ENCODE measurements at regions of chr3 and their contacts with region 1.

Region 1: DNA sequence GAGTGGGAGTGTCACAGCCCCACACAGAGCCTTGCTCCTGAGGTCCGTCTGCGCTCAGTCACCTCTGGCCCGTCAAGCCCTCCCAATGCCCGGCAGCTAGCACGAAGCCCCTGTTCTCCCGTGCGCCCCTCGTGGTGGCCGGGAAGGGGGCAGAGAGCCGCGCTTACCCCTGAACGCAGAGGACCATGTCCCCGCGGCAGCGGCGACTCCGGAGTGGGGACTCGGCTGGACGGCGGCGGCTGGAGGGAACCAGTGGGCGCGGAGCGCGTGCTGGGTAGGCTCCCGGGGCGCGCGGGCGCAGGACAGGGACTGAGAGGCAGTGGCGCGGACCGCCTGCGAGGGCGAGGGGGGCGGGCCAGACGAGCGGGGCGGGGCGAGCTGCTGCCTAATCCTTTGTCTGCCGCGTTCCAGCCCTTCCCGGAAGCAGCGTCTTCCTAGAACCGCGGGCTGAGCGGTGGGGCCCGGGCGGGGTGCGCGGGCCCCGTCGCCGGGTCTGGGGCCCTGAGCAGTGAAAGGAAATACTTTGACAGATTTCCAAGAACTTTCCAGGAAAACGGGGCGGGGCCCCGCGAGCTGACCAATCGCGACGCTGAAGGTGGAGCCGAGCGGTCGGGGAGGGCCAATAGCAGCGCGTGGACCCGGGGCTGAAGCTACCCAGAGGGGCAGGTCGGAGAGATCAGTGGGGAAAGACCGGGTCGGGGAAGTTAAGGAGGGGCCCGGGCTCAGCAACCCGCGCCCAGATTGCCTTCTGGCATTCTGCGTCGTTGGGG is at the start of gene CISH:
- DNase-seq: peak; percentile 93
- H3K4me3 Mint-ChIP-seq: peak within 1 kb of the TSS; percentile 93
- H3K27ac Mint-ChIP-seq: peak within 1 kb of the TSS; percentile 42
- H3K4me1 Mint-ChIP-seq: peaks cover 40% of the 10 kb centered on the region
- H3K27me3 Mint-ChIP-seq: no peaks in the 10 kb centered on the region
- CTCF ChIP-seq: peak; percentile 37
- total RNA-seq, gene CISH: 0.26 and 0.59 TPM in 2 replicates

Region 2: DNA sequence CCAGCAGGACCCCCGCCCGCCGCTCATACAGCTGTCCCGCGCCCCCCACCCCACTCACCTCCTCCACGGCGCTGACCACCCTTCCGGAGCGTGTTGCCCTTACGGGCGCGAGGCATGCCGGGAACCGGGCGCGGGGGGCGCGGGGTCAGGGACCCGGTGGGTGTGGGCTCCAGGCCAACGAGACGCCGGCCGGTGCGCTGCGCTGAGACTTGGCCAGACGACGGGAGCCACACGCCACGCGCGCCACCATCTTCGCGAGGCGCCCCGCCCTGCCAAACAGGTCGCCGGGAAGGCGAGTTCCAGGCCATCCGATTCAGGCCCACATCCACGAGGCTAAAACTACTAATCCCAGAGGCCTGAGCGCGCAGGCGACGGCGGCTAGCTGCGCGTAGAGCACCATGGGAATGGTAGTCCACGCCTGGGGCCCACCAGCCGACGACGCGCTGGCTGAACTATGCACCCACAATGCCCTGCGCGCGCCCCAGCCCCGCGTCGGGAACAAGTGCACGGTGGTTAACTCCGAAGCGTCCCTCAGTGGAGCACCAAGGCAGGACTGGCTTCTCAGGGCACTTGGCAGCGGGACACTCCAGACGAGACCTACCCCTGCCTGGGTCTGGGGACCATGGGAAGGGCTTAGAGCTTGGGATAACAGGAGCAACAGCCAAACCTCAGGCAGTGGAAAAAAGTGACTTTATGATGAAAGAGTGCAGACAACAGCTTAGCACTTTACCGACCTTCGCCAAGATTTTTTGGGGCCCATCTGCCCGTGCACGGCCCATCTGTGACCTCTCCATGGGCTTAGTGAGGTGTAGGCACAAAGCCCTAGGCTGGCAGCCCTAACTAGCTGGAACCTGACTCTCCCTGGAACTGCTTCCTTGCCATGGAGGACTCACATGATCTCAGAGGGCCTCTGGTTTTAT is 319.2 kb before region 1 on chr3 and contains the start of gene IFRD2:
- CTCF ChIA-PET with region 1: no interaction called
- POLR2A ChIA-PET with region 1: no interaction called
- intact Hi-C with region 1: no loop called
- DNase-seq: peak; percentile 97
- H3K4me3 Mint-ChIP-seq: peak within 1 kb of the TSS; percentile 96
- H3K27ac Mint-ChIP-seq: peak within 1 kb of the TSS; percentile 93
- H3K4me1 Mint-ChIP-seq: peaks cover 14% of the 10 kb centered on the region
- H3K27me3 Mint-ChIP-seq: no peaks in the 10 kb centered on the region
- CTCF ChIP-seq: no peak
- total RNA-seq, gene IFRD2: 135 and 182 TPM in 2 replicates

Region 3: DNA sequence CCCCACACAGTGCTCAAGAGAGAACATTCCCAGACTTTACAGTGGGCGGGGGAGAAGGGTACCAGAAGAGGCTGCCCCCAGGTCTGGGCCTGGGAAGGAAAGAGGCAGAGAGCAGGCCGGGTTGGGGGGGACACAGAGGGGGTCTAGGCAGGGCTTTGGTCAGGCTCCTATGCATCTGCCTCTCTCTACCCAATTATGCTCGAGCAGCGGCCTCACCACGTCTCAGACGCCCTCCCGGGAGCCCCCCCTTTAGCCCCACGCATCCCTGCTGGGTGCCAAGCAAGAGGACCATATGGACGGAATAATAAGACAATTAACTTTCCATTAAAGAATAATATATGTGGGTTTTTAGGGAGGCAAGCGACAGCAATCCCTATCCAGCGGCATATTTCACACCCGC is 141.0 kb before region 1 on chr3:
- CTCF ChIA-PET with region 1: no interaction called
- POLR2A ChIA-PET with region 1: no interaction called
- intact Hi-C with region 1: no loop called
- DNase-seq: no peak
- H3K4me3 Mint-ChIP-seq: no peak overlapping the region
- H3K27ac Mint-ChIP-seq: no peak overlapping the region
- H3K4me1 Mint-ChIP-seq: no peaks in the 10 kb centered on the region
- H3K27me3 Mint-ChIP-seq: peaks cover 78% of the 10 kb centered on the region
- CTCF ChIP-seq: no peak

Region 4: GRCh38 chr3:50542177-50543034 is 69.2 kb before region 1 on chr3:
- CTCF ChIA-PET with region 1: interaction called, 33 read pairs
- POLR2A ChIA-PET with region 1: no interaction called
- intact Hi-C with region 1: no loop called
- DNase-seq: peak; percentile 69
- H3K4me3 Mint-ChIP-seq: no peak overlapping the region
- H3K27ac Mint-ChIP-seq: no peak overlapping the region
- H3K4me1 Mint-ChIP-seq: no peaks in the 10 kb centered on the region
- H3K27me3 Mint-ChIP-seq: peaks cover 18% of the 10 kb centered on the region
- CTCF ChIP-seq: peak; percentile 73

Region 5: GRCh38 chr3:50600841-50601591 is 10.6 kb before region 1 on chr3:
- CTCF ChIA-PET with region 1: interaction called, 78 read pairs
- POLR2A ChIA-PET with region 1: interaction called, 34 read pairs
- intact Hi-C with region 1: no loop called
- DNase-seq: peak; percentile 98
- H3K4me3 Mint-ChIP-seq: peak overlapping the region; percentile 30
- H3K27ac Mint-ChIP-seq: peak overlapping the region; percentile 89
- H3K4me1 Mint-ChIP-seq: peaks cover 21% of the 10 kb centered on the region
- H3K27me3 Mint-ChIP-seq: no peaks in the 10 kb centered on the region
- CTCF ChIP-seq: no peak

Region 6: GRCh38 chr3:51099794-51100535 is 488.3 kb after region 1 on chr3:
- CTCF ChIA-PET with region 1: interaction called, 35 read pairs
- POLR2A ChIA-PET with region 1: no interaction called
- intact Hi-C with region 1: loop called (anchors 1 kb)
- DNase-seq: peak; percentile 73
- H3K4me3 Mint-ChIP-seq: no peak overlapping the region
- H3K27ac Mint-ChIP-seq: no peak overlapping the region
- H3K4me1 Mint-ChIP-seq: no peaks in the 10 kb centered on the region
- H3K27me3 Mint-ChIP-seq: peaks cover 19% of the 10 kb centered on the region
- CTCF ChIP-seq: peak; percentile 65

Region 7: DNA sequence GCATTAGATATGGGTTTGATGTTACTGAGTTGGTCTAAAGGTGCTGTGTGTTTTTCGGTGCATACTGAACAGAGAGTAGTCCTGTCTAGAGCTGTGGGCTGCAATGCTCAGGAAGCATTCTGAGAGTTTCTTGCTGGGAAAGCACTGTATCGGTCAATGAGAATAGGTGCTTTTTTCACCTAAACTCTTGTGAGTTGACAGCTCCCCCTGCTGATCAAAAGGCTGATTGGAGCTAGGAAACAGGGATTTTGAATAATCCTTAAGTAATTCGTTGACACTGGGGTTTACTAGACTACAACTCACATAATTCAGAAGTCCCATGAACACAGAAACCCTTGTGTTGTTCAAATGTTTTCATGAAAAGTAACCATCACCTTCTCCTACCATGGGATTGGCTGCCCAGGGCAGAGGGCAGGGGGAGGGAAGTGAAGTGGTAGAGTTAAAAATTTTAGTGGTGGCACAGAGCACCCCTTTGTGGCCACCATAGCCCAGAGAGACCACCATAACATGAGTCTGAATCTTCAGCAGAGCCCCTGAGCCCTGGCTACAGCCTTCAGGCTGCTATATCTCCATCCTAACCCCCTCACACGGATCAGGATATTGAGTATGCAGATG is 760.4 kb after region 1 on chr3:
- CTCF ChIA-PET with region 1: interaction called, 53 read pairs
- POLR2A ChIA-PET with region 1: interaction called, 9 read pairs
- intact Hi-C with region 1: loop called (anchors 1 kb)
- DNase-seq: peak; percentile 77
- H3K4me3 Mint-ChIP-seq: no peak overlapping the region
- H3K27ac Mint-ChIP-seq: no peak overlapping the region
- H3K4me1 Mint-ChIP-seq: no peaks in the 10 kb centered on the region
- H3K27me3 Mint-ChIP-seq: no peaks in the 10 kb centered on the region
- CTCF ChIP-seq: peak; percentile 86

Region 8: GRCh38 chr3:51434746-51435327 is 823.2 kb after region 1 on chr3:
- CTCF ChIA-PET with region 1: interaction called, 6 read pairs
- POLR2A ChIA-PET with region 1: no interaction called
- intact Hi-C with region 1: loop called (anchors 2 kb)
- DNase-seq: peak; percentile 70
- H3K4me3 Mint-ChIP-seq: no peak overlapping the region
- H3K27ac Mint-ChIP-seq: peak overlapping the region; percentile 83
- H3K4me1 Mint-ChIP-seq: peaks cover 9% of the 10 kb centered on the region
- H3K27me3 Mint-ChIP-seq: no peaks in the 10 kb centered on the region
- CTCF ChIP-seq: peak; percentile 64

Measured in MCF 10A (cell line).